ENCODE measurements at regions of chr17 and their contacts with region 1.

Region 1: DNA sequence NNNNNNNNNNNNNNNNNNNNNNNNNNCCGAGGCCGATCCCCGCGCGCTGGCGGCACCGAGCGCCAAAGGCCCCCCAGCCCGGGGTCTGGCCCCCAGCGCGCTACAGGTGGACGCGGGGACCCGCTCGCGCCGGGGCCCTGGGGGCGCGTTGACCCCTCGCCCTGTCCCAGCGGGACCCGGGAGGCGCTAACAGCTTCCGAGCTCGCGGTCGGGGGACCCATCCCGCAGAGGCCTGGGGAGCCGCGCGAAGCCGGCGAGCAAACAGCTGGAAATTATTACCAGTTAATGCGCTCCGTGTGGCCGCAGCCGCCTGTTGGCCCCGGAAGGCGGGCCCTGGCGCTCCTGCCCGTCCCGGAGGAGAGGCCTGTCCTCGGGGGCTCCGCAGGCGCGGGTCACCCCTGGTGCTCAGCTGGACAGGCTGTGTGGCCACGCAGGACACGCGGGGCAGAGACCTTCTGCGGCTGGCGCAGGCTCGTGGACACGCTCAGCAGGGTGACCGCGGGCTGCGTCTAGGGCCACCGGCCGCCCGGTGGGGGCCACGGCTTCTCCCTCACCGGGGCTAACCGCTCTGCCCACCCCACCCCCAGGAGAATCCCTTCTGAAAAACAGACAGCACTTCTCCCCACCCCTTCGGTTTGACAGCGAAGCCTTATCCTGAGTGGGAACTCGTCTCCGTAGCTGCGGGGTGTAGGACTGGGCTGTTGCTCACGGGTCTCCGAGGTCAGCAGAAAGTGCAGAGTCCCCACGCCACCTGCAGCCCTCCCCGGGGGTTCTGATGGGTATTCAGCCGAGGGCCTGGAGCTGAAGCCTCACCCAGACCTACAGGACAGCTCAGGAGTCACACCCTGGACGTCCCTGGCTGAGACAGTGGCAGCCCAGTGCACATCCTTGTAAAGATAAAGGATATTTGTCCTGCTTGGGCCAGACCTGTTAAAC is 138.7 kb upstream of the RPH3AL start:
- DNase-seq: peak in 1 of 2 experiments; percentile 77
- H3K4me3 ChIP-seq: peak overlapping the region; percentile 32 to 64 (median 50)
- H3K27ac ChIP-seq: no peak overlapping the region
- H3K4me1 ChIP-seq: peaks cover 8 to 16% (median 15%) of the 10 kb centered on the region in 4 experiments
- H3K27me3 ChIP-seq: peaks cover 5 to 21% (median 14%) of the 10 kb centered on the region in 4 experiments; a peak in 6 of 7 replicates
- CTCF ChIP-seq: peak in 1 of 3 experiments; percentile 0; a peak in 1 of 4 replicates
- EP300 ChIP-seq: no peak
- POLR2A ChIP-seq: no peak
- RAD21 ChIP-seq: no peak

Region 2: DNA sequence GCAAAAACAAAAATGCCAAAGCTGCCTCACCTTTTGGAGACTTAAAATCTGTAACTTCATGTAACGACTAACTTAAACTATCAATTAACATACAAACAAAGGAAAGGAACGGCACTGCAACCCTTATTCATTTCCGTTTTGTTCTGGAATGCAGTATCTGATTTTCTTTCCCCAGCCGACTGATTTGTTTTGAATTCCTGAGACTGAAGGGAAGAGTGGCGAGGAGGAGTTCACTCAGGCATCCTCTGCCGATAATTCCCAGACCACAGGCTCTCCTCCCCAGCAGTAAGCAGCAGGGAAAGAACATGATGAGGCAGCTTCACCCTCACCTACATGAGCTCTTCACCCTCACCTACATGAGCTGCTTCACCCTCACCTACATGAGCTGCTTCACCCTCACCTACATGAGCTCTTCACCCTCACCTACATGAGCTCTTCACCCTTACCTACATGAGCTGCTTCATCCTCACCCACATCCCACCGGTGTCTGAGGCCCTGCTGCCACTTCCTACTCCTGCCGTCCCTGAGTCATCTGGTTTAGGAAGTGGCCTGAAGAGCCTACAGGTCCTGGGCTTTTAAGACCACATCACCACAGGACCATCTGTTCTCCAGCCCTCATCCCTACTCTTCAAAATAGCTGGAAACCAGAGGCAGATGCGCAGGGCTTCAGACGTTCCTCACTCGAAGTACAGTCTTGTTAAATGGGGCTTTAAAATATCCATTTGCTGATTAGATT is 29.3 kb after region 1 on chr17:
- CTCF ChIA-PET with region 1: interaction called, 10 read pairs
- POLR2A ChIA-PET with region 1: no interaction called
- DNase-seq: no peak
- H3K4me3 ChIP-seq: no peak overlapping the region
- H3K27ac ChIP-seq: 0 out of 2 replicates have a peak overlapping the region, but pooled peaks have one; percentile 4
- H3K4me1 ChIP-seq: peaks cover 0 to 13% (median 8%) of the 10 kb centered on the region in 4 experiments; a peak in 6 of 7 replicates
- H3K27me3 ChIP-seq: no peaks in the 10 kb centered on the region
- CTCF ChIP-seq: no peak
- EP300 ChIP-seq: no peak
- POLR2A ChIP-seq: no peak
- RAD21 ChIP-seq: no peak

Region 3: DNA sequence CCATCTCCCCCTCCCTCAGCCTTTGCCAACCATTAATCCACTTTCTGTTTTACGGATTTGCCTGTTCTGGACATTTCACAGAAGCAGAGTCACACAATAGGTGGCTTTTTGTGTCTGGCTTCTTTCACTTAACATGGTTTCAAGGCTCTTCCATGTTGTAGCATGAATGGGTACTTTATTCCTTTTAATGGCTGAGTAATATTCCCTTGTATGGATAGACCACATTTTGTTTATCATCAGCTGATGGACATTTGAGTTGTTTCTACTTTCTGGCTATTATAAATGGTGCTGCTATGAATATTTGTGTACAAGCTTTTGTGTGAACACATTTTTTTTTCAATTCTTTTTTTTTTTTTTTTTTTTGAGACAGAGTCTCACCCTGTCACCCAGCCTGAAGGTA is 36.9 kb after region 1 on chr17:
- CTCF ChIA-PET with region 1: interaction called, 10 read pairs
- POLR2A ChIA-PET with region 1: no interaction called
- DNase-seq: no peak
- H3K4me3 ChIP-seq: no peak overlapping the region
- H3K27ac ChIP-seq: no peak overlapping the region
- H3K4me1 ChIP-seq: no peaks in the 10 kb centered on the region
- H3K27me3 ChIP-seq: no peaks in the 10 kb centered on the region
- CTCF ChIP-seq: no peak
- EP300 ChIP-seq: no peak
- POLR2A ChIP-seq: no peak
- RAD21 ChIP-seq: no peak

Region 4: DNA sequence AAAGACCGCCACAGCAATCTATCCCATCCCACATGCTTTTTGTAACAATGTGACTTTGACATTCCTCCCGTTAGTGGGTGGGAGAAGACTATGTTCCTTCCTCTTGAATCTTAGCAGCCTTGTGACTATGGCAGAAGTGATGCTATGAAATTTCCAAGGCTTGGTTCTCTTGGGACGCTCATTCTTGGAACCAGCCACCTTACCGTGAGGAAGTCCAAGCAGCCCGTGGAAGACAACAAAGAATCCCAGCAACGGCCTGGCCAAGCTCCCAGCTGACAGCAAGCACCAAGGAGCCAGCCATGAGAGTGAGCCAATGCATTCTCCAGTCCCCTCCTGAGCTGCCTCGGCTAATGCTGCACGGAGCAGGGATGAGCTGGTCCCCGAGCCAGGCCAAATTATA is 161.0 kb after region 1 on chr17:
- CTCF ChIA-PET with region 1: no interaction called
- POLR2A ChIA-PET with region 1: no interaction called
- DNase-seq: no peak
- H3K4me3 ChIP-seq: no peak overlapping the region
- H3K27ac ChIP-seq: no peak overlapping the region
- H3K4me1 ChIP-seq: peaks cover 0 to 8% (median 2%) of the 10 kb centered on the region in 4 experiments; a peak in 4 of 7 replicates
- H3K27me3 ChIP-seq: no peaks in the 10 kb centered on the region
- CTCF ChIP-seq: no peak
- EP300 ChIP-seq: no peak
- POLR2A ChIP-seq: no peak
- RAD21 ChIP-seq: no peak